Panc1 (cell line): ENCODE measurements at regions of chr2 and their contacts with region 1.

Region 1: DNA sequence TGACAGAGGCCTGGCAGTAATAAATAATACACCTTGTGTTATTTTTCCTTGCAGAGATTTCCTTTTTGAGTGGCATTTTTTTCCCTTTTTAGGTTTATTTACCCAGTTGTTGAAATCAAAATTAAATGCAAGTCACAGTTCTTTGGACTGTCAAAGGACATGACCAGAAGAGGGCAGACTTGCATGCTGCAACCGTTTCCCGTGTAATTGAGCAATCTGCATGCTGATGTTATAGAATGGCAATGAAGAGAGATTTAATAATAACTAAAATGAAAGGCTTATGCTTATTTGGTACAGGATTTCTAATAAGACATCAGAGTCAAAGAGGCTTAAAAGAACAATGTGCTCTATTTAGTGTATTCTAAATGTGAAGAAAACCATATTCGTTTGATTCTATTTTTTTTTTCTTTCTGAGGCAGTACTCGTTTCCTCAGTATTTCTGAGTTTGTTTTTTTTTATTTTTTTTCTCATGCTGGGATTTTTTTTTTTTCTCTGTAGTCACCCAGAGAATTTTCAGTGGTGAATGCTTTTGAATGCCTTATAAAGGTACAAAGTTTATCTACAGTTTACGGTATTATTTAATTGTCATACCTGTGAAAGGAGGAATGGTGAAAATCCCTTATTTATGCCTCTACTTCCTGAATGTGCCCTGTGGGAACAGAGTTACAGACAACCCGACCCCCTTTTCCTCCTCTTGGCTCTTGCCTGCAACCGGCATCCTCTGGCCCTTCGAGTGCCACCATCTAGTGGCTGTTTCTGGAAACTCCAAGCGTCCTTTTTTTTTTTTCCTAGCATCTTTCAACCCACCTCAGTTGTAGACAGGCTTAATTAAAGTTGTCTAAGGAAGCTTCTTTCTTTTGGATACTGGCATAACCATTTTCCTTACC is 368.5 kb downstream of the LRRTM1 start:
- DNase-seq: peak; percentile 36
- ATAC-seq: peak; percentile 86
- H3K4me3 ChIP-seq: no peak overlapping the region
- H3K27ac ChIP-seq: no peak overlapping the region
- H3K4me1 ChIP-seq: no peaks in the 10 kb centered on the region; the same call in 1 of the 2 replicates
- H3K27me3 ChIP-seq: no peaks in the 10 kb centered on the region
- CTCF ChIP-seq: peak; percentile 88

Region 2: GRCh38 chr2:79971807-79972206 is 35.8 kb after region 1 on chr2:
- CTCF ChIA-PET with region 1: no interaction called
- POLR2A ChIA-PET with region 1: no interaction called
- in situ Hi-C with region 1: no loop called
- intact Hi-C with region 1: no loop called
- DNase-seq: no peak
- ATAC-seq: no peak
- H3K4me3 ChIP-seq: no peak overlapping the region
- H3K27ac ChIP-seq: no peak overlapping the region
- H3K4me1 ChIP-seq: no peaks in the 10 kb centered on the region
- H3K27me3 ChIP-seq: no peaks in the 10 kb centered on the region
- CTCF ChIP-seq: no peak

Region 3: DNA sequence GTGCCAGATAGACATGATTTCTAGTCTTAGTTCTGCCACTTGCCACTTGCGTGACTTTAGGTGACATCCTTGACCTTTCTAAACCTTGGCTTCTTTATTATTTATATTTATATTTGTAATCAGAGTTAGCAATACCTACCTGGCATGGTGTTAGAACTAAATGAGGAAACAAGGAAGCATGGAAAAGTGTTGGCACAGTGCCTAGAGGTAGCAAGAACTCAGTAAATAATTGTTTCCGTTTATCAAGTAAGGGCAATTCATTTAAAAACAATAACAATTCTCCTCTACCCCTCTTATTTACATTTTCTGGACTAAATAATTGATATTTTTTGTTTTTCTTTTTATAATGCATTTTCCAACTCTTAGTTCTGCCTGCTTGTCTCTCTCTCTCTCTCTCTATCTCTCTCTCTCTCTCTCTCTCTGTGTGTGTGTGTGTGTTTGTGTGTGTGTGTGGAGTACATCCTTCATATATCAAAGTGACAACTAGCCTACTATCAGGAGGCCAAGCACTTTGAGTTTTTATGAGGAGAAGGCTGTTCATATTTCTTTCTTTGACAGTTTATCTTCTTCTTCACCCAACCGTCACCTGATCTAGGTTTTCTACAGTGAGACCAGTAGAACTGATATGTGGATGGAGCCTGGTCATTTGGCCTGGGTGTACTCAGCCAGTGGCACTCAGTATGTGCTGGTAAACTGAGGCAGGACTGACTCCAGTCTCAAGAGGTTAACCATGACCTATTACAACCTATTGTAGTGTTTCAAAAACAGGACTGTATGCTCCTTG is 234.0 kb after region 1 on chr2:
- CTCF ChIA-PET with region 1: interaction called, 10 read pairs
- POLR2A ChIA-PET with region 1: no interaction called
- in situ Hi-C with region 1: no loop called
- intact Hi-C with region 1: no loop called
- DNase-seq: no peak
- ATAC-seq: no peak
- H3K4me3 ChIP-seq: no peak overlapping the region
- H3K27ac ChIP-seq: no peak overlapping the region
- H3K4me1 ChIP-seq: no peaks in the 10 kb centered on the region
- H3K27me3 ChIP-seq: no peaks in the 10 kb centered on the region
- CTCF ChIP-seq: no peak